Motor neuron (in vitro differentiated cells): ENCODE measurements at regions of chr15 and their contacts with region 1.

Region 1: DNA sequence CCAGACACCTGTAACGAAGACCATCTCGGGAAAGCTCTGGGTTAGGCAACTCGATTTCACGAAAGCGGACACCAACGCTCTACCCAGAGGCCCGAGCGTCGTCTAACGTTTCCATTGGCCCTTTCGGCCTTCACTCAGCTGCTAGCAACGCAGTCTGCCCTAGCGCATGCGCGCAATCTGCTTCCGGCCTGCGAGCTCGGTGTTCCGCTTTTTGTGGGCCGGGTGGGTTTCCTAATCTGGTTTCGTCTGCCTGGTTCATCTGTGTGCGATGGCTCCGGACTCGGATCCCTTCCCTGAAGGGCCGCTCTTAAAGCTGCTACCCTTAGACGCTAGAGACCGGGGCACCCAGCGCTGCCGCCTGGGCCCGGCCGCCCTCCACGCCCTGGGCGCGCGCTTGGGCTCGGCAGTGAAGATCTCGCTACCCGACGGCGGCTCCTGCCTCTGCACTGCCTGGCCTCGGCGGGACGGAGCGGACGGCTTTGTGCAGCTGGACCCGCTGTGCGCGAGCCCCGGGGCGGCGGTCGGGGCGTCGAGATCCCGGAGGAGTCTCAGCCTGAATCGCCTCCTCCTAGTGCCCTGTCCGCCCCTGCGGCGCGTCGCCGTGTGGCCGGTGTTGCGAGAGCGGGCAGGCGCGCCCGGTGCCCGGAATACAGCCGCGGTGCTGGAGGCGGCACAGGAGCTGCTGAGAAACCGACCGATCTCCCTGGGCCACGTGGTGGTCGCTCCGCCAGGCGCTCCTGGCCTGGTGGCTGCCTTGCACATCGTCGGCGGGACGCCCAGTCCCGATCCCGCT is 24.0 kb upstream of the GATM start:
- ATAC-seq: peak; percentile 78 to 97 (median 95)
- H3K4me3 ChIP-seq: peak overlapping the region; percentile 71 to 96 (median 89)
- H3K27ac ChIP-seq: peak overlapping the region; percentile 87 to 90
- H3K4me1 ChIP-seq: peaks cover 8 to 21% of the 10 kb centered on the region in 2 donors

Region 2: DNA sequence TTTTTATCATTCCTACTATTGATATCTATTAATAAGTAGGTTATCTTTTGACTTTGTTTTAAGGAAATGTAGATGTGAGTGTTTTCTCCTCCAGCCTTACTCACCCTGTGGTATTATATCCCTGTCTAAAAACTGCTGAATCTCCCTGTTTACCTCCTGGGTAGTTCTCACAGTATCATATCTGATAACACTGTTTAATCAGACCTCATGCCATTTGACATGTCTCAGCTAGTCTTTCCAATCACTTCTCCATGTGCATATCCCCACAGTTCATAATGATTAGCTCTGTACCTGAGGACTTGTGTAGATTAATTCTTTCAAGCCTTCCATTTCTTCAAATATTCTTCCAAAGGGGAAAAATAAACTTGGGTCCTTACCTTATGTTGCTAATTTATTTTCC is 319.1 kb before region 1 on chr15:
- in situ Hi-C with region 1: no loop called
- ATAC-seq: no peak
- H3K4me3 ChIP-seq: no peak overlapping the region
- H3K27ac ChIP-seq: no peak overlapping the region
- H3K4me1 ChIP-seq: peaks cover 0 to under 1% of the 10 kb centered on the region in 2 donors

Region 3: GRCh38 chr15:45166834-45167630 is 235.3 kb before region 1 on chr15:
- in situ Hi-C with region 1: loop called in 3 of 9 experiments (anchors 25 kb)
- ATAC-seq: peak; percentile 72 to 84 (median 76)
- H3K4me3 ChIP-seq: peak overlapping the region; percentile 30 to 51 (median 38)
- H3K27ac ChIP-seq: peak overlapping the region; percentile 95 to 97
- H3K4me1 ChIP-seq: peaks cover 25 to 51% of the 10 kb centered on the region in 2 donors

Region 4: GRCh38 chr15:45307230-45307924 is 95.0 kb before region 1 on chr15:
- in situ Hi-C with region 1: loop called in 1 of 9 experiments (anchors 10 kb)
- ATAC-seq: peak in 7 of 8 experiments; percentile 34 to 79 (median 66)
- H3K4me3 ChIP-seq: no peak overlapping the region
- H3K27ac ChIP-seq: peak overlapping the region in 1 of 2 donors; percentile 6
- H3K4me1 ChIP-seq: no peaks in the 10 kb centered on the region